Activated CD4-positive, alpha-beta memory T cell treated with anti-CD3 and anti-CD28 coated beads, Interleukin-2, amount 10 ng/mL, durations not matched to agents 7 days and 5 days (primary cell): ENCODE measurements at regions of chr14 and their contacts with region 1.

Region 1: GRCh38 chr14:23631702-23632460 is 4.3 kb upstream of the DHRS2 start:
- DNase-seq: peak; percentile 71
- H3K4me3 Mint-ChIP-seq: no peak overlapping the region
- H3K27ac Mint-ChIP-seq: no peak overlapping the region
- H3K4me1 Mint-ChIP-seq: peaks cover 12% of the 10 kb centered on the region
- H3K27me3 Mint-ChIP-seq: peaks cover 5% of the 10 kb centered on the region

Region 2: DNA sequence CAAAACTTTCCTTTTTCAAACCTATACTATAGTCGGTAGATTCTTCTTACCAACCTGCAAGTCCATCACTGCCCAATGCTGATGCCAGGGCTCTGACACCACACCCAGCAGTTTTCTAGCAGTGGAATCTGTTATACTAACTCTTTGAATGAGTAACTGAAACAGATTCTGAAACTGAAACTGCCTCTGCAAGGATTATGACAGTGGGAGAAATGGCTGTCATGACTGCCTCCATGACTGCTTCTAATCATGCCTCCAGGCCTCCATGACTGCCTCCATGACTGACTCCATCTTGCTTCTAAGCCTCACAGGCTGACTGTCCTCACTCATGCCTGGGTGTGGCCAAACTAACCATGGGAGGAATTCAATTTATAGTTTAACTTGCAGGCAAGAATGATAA is 894.8 kb before region 1 on chr14:
- CTCF ChIA-PET with region 1: no interaction called
- POLR2A ChIA-PET with region 1: no interaction called
- DNase-seq: peak; percentile 61
- H3K4me3 Mint-ChIP-seq: no peak overlapping the region
- H3K27ac Mint-ChIP-seq: peak overlapping the region; percentile 72
- H3K4me1 Mint-ChIP-seq: peaks cover 27% of the 10 kb centered on the region
- H3K27me3 Mint-ChIP-seq: peaks cover 6% of the 10 kb centered on the region

Region 3: GRCh38 chr14:23605931-23606585 is 25.8 kb before region 1 on chr14:
- CTCF ChIA-PET with region 1: interaction called, 56 read pairs
- POLR2A ChIA-PET with region 1: no interaction called
- DNase-seq: no peak
- H3K4me3 Mint-ChIP-seq: no peak overlapping the region
- H3K27ac Mint-ChIP-seq: peak overlapping the region; percentile 76
- H3K4me1 Mint-ChIP-seq: peaks cover 40% of the 10 kb centered on the region
- H3K27me3 Mint-ChIP-seq: no peaks in the 10 kb centered on the region

Region 4: GRCh38 chr14:23621204-23621931 is 10.5 kb before region 1 on chr14:
- CTCF ChIA-PET with region 1: interaction called, 16 read pairs
- POLR2A ChIA-PET with region 1: no interaction called
- DNase-seq: no peak
- H3K4me3 Mint-ChIP-seq: no peak overlapping the region
- H3K27ac Mint-ChIP-seq: no peak overlapping the region
- H3K4me1 Mint-ChIP-seq: no peaks in the 10 kb centered on the region
- H3K27me3 Mint-ChIP-seq: peaks cover 5% of the 10 kb centered on the region

Region 5: GRCh38 chr14:23653066-23653465 is 21.2 kb after region 1 on chr14:
- CTCF ChIA-PET with region 1: interaction called, 22 read pairs
- POLR2A ChIA-PET with region 1: no interaction called
- DNase-seq: no peak
- H3K4me3 Mint-ChIP-seq: no peak overlapping the region
- H3K27ac Mint-ChIP-seq: no peak overlapping the region
- H3K4me1 Mint-ChIP-seq: no peaks in the 10 kb centered on the region
- H3K27me3 Mint-ChIP-seq: peaks cover 3% of the 10 kb centered on the region

Region 6: GRCh38 chr14:23704890-23705289 is 73.0 kb after region 1 on chr14:
- CTCF ChIA-PET with region 1: no interaction called
- POLR2A ChIA-PET with region 1: no interaction called
- DNase-seq: no peak
- H3K4me3 Mint-ChIP-seq: no peak overlapping the region
- H3K27ac Mint-ChIP-seq: no peak overlapping the region
- H3K4me1 Mint-ChIP-seq: no peaks in the 10 kb centered on the region
- H3K27me3 Mint-ChIP-seq: peaks cover 11% of the 10 kb centered on the region

Region 7: GRCh38 chr14:23804817-23805216 is 172.9 kb after region 1 on chr14:
- CTCF ChIA-PET with region 1: no interaction called
- POLR2A ChIA-PET with region 1: no interaction called
- DNase-seq: no peak
- H3K4me3 Mint-ChIP-seq: no peak overlapping the region
- H3K27ac Mint-ChIP-seq: no peak overlapping the region
- H3K4me1 Mint-ChIP-seq: no peaks in the 10 kb centered on the region
- H3K27me3 Mint-ChIP-seq: peaks cover 15% of the 10 kb centered on the region

Region 8: DNA sequence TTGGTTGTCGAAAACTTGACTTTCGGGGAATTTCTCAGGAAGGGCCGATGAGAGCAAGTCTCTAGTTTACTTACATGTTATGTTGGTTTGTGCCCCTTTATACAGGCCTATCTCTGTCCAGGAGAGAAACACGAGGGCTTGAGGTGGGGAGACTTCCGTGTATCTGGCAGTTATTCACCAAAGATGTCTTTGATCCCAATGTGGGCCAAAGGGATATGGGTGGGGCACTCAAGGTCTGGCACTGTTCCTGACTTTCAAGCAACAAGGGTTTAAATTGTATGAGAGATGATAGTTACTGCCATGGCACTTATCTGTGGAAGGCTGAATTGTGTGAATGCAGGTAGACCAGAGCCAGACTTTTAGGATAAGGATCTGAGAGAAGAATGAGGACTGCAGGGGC is 184.5 kb after region 1 on chr14:
- CTCF ChIA-PET with region 1: no interaction called
- POLR2A ChIA-PET with region 1: no interaction called
- DNase-seq: no peak
- H3K4me3 Mint-ChIP-seq: no peak overlapping the region
- H3K27ac Mint-ChIP-seq: no peak overlapping the region
- H3K4me1 Mint-ChIP-seq: no peaks in the 10 kb centered on the region
- H3K27me3 Mint-ChIP-seq: no peaks in the 10 kb centered on the region

Region 9: GRCh38 chr14:23910101-23910875 is 278.4 kb after region 1 on chr14:
- CTCF ChIA-PET with region 1: interaction called, 33 read pairs
- POLR2A ChIA-PET with region 1: no interaction called
- DNase-seq: no peak
- H3K4me3 Mint-ChIP-seq: no peak overlapping the region
- H3K27ac Mint-ChIP-seq: no peak overlapping the region
- H3K4me1 Mint-ChIP-seq: no peaks in the 10 kb centered on the region
- H3K27me3 Mint-ChIP-seq: peaks cover 20% of the 10 kb centered on the region